T-cell (primary cell): ENCODE measurements at regions of chr11 and their contacts with region 1.

Region 1: GRCh38 chr11:13030857-13031256 is 21.7 kb downstream of the RASSF10 start:
- DNase-seq: no peak
- ATAC-seq: no peak
- H3K4me3 ChIP-seq: no peak overlapping the region
- H3K4me3 Mint-ChIP-seq: no peak overlapping the region
- H3K27ac ChIP-seq: no peak overlapping the region
- H3K27ac Mint-ChIP-seq: no peak overlapping the region
- H3K4me1 ChIP-seq: no peaks in the 10 kb centered on the region
- H3K4me1 Mint-ChIP-seq: no peaks in the 10 kb centered on the region
- H3K27me3 ChIP-seq: peaks cover 0 to 23% of the 10 kb centered on the region in 2 experiments
- H3K27me3 Mint-ChIP-seq: peaks cover 15 to 21% of the 10 kb centered on the region in 2 donors

Region 2: GRCh38 chr11:12090761-12091258 is 940.0 kb before region 1 on chr11:
- CTCF ChIA-PET with region 1: interaction called in 1 of 2 experiments, 10 read pairs
- POLR2A ChIA-PET with region 1: no interaction called
- DNase-seq: no peak
- ATAC-seq: no peak
- H3K4me3 ChIP-seq: no peak overlapping the region
- H3K4me3 Mint-ChIP-seq: no peak overlapping the region
- H3K27ac ChIP-seq: no peak overlapping the region
- H3K27ac Mint-ChIP-seq: peak overlapping the region in 1 of 2 donors; percentile 79
- H3K4me1 ChIP-seq: peaks cover 41 to 58% of the 10 kb centered on the region in 2 experiments
- H3K4me1 Mint-ChIP-seq: peaks cover 60 to 74% (median 62%) of the 10 kb centered on the region in 3 donors
- H3K27me3 ChIP-seq: no peaks in the 10 kb centered on the region
- H3K27me3 Mint-ChIP-seq: no peaks in the 10 kb centered on the region

Region 3: DNA sequence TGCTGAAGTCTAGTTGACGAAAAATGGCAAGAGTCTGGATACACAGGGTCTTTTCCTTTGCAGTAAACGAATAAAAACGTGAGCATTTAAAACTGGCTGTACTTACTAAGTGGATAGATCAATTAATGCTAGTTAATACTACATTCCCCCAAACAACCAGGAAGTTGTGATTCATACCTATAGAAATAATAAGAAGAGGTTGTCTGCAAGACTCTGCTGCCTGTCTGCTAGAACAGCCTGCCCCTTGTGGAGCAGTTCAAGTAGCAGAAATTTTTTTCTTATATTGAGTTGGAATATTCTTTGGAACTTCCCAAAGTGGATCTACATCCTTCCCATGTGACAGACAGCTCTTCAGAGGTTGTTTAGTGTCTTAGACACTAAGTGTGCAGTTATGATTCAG is 269.8 kb before region 1 on chr11:
- CTCF ChIA-PET with region 1: no interaction called
- POLR2A ChIA-PET with region 1: no interaction called
- DNase-seq: no peak
- ATAC-seq: no peak
- H3K4me3 ChIP-seq: no peak overlapping the region
- H3K4me3 Mint-ChIP-seq: no peak overlapping the region
- H3K27ac ChIP-seq: no peak overlapping the region
- H3K27ac Mint-ChIP-seq: no peak overlapping the region
- H3K4me1 ChIP-seq: no peaks in the 10 kb centered on the region
- H3K4me1 Mint-ChIP-seq: no peaks in the 10 kb centered on the region
- H3K27me3 ChIP-seq: peaks cover 2% of the 10 kb centered on the region in 2 experiments
- H3K27me3 Mint-ChIP-seq: peaks cover 10 to 36% of the 10 kb centered on the region in 2 donors